ENCODE measurements at regions of chr6 and their contacts with region 1.

Region 1: GRCh38 chr6:124854338-124854922 is 107.8 kb upstream of the RNF217 start:
- DNase-seq: peak in 1 of 3 donors; percentile 16
- H3K4me3 ChIP-seq: no peak overlapping the region
- H3K4me3 Mint-ChIP-seq: no peak overlapping the region
- H3K27ac ChIP-seq: no peak overlapping the region
- H3K27ac Mint-ChIP-seq: no peak overlapping the region
- H3K4me1 ChIP-seq: no peaks in the 10 kb centered on the region
- H3K4me1 Mint-ChIP-seq: no peaks in the 10 kb centered on the region
- H3K27me3 ChIP-seq: no peaks in the 10 kb centered on the region
- H3K27me3 Mint-ChIP-seq: no peaks in the 10 kb centered on the region
- CTCF ChIP-seq: peak; percentile 54

Region 2: DNA sequence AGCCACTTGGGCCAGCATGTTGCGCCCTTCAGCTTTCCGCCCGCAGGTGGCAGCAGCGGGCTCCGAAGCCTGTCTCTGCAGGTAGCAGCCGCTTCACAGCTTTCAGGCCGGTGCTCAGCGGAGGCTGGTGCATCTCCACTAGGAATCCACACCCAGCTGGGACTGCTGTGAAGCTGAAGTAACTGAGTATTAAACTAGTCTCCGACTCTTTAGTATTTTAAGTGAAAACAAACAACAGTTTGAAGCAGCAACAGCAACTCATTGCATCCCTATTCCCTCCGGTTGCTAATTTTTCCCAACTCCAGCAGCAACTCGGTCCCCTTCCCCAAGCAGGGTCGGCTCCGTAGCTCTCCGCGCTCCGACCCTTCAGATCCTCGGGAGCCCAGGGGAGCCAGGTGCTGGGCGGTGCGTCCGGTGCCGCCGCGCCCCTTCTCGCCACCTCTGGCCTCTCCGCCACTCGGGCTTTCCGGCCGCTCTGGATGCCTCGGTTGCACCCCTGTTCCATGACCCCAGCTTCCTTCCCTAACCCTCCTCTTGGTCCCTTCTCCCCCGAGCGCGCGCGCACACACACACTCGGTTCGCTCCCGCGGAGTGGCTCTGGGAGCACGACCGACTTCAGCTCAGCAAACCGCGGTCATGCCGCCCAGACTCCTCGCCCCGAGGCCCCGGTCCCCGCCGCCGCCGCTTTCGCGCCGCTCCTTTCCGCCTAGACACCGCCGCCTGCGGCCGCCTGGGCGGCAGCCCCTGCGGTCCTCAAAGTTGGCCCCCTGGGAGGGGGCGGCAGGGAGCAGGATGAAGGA is 1051.5 kb before region 1 on chr6:
- intact Hi-C with region 1: loop called (anchors 5 to 10 kb)
- DNase-seq: peak; percentile 22 to 45 (median 44)
- H3K4me3 ChIP-seq: peak overlapping the region; percentile 22 to 72 (median 40)
- H3K4me3 Mint-ChIP-seq: peak overlapping the region; percentile 76 to 97
- H3K27ac ChIP-seq: no peak overlapping the region
- H3K27ac Mint-ChIP-seq: no peak overlapping the region
- H3K4me1 ChIP-seq: peaks cover 10 to 14% of the 10 kb centered on the region in 2 donors
- H3K4me1 Mint-ChIP-seq: peaks cover 13% of the 10 kb centered on the region
- H3K27me3 ChIP-seq: peaks cover 38 to 43% of the 10 kb centered on the region in 2 donors
- H3K27me3 Mint-ChIP-seq: peaks cover 29 to 37% (median 34%) of the 10 kb centered on the region in 3 donors
- CTCF ChIP-seq: peak; percentile 92

Region 3: GRCh38 chr6:124795643-124796463 is 58.6 kb before region 1 on chr6:
- intact Hi-C with region 1: no loop called
- DNase-seq: peak in 1 of 3 donors; percentile 11
- H3K4me3 ChIP-seq: no peak overlapping the region
- H3K4me3 Mint-ChIP-seq: no peak overlapping the region
- H3K27ac ChIP-seq: no peak overlapping the region
- H3K27ac Mint-ChIP-seq: no peak overlapping the region
- H3K4me1 ChIP-seq: no peaks in the 10 kb centered on the region
- H3K4me1 Mint-ChIP-seq: no peaks in the 10 kb centered on the region
- H3K27me3 ChIP-seq: no peaks in the 10 kb centered on the region
- H3K27me3 Mint-ChIP-seq: peaks cover 0 to 3% (median 0%) of the 10 kb centered on the region in 3 donors
- CTCF ChIP-seq: peak; percentile 27

Measured in CD14-positive monocyte (primary cell).